HepG2 (cell line): ENCODE measurements at regions of chrX and their contacts with region 1.

Region 1: DNA sequence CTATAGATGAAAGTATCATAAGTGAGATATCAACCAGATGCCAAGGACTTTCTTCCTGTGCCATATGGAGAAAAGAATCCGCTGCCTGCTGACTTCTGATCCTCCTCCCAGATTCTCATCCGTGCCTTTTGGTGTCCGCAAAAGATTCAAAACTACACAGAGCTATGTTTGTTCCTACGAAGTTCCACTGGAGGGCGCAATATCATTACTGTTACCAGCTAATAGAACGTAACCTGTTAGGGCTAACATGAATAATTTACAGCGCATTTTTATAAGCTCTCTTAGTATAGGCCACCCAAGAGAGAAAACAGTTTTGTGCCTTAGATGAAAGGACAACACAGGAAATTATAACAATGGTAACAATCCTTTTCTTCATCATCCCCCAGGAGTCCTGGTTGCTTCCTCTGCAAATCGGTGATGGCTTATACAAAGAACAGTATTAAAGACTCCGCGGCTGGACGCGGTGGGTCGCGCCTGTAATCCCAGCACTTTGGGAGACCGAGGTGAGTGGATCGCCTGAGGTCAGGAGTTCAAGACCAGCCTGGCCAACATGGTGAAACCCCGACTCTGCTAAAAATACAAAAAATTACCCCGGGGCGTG is 22.8 kb upstream of the CENPVL3 start:
- DNase-seq: peak; percentile 12
- ATAC-seq: peak; percentile 40; the same call in 1 of the 3 replicates
- H3K4me3 ChIP-seq: no peak overlapping the region
- H3K27ac ChIP-seq: no peak overlapping the region
- H3K4me1 ChIP-seq: no peaks in the 10 kb centered on the region
- H3K27me3 ChIP-seq: no peaks in the 10 kb centered on the region
- CTCF ChIP-seq: peak; percentile 60
- EP300 ChIP-seq: no peak
- POLR2A ChIP-seq: no peak
- RAD21 ChIP-seq: no peak

Region 2: GRCh38 chrX:51860679-51861078 is 219.2 kb after region 1 on chrX:
- CTCF ChIA-PET with region 1: interaction called, 3 read pairs
- POLR2A ChIA-PET with region 1: no interaction called
- in situ Hi-C with region 1: loop called (anchors 25 kb)
- intact Hi-C with region 1: no loop called
- DNase-seq: peak; percentile 14
- ATAC-seq: peak; percentile 47; the same call in 1 of the 3 replicates
- H3K4me3 ChIP-seq: no peak overlapping the region
- H3K27ac ChIP-seq: no peak overlapping the region
- H3K4me1 ChIP-seq: no peaks in the 10 kb centered on the region
- H3K27me3 ChIP-seq: no peaks in the 10 kb centered on the region
- CTCF ChIP-seq: peak; percentile 62
- EP300 ChIP-seq: no peak
- POLR2A ChIP-seq: no peak
- RAD21 ChIP-seq: no peak